Caco-2 (cell line): ENCODE measurements at regions of chr20 and their contacts with region 1.

Region 1: GRCh38 chr20:56458206-56458821 is 10.1 kb upstream of the RTF2 start:
- DNase-seq: no peak
- H3K4me3 ChIP-seq: no peak overlapping the region
- H3K4me3 Mint-ChIP-seq: no peak overlapping the region
- H3K27ac Mint-ChIP-seq: no peak overlapping the region
- H3K4me1 ChIP-seq: no peaks in the 10 kb centered on the region
- H3K4me1 Mint-ChIP-seq: no peaks in the 10 kb centered on the region
- H3K27me3 ChIP-seq: no peaks in the 10 kb centered on the region
- H3K27me3 Mint-ChIP-seq: peaks cover 14% of the 10 kb centered on the region
- CTCF ChIP-seq: no peak

Region 2: GRCh38 chr20:56380375-56380774 is 77.9 kb before region 1 on chr20:
- CTCF ChIA-PET with region 1: no interaction called
- POLR2A ChIA-PET with region 1: no interaction called
- intact Hi-C with region 1: no loop called
- DNase-seq: no peak
- H3K4me3 ChIP-seq: no peak overlapping the region
- H3K4me3 Mint-ChIP-seq: no peak overlapping the region
- H3K27ac Mint-ChIP-seq: no peak overlapping the region
- H3K4me1 ChIP-seq: no peaks in the 10 kb centered on the region
- H3K4me1 Mint-ChIP-seq: peaks cover 10% of the 10 kb centered on the region
- H3K27me3 ChIP-seq: no peaks in the 10 kb centered on the region
- H3K27me3 Mint-ChIP-seq: no peaks in the 10 kb centered on the region
- CTCF ChIP-seq: no peak

Region 3: DNA sequence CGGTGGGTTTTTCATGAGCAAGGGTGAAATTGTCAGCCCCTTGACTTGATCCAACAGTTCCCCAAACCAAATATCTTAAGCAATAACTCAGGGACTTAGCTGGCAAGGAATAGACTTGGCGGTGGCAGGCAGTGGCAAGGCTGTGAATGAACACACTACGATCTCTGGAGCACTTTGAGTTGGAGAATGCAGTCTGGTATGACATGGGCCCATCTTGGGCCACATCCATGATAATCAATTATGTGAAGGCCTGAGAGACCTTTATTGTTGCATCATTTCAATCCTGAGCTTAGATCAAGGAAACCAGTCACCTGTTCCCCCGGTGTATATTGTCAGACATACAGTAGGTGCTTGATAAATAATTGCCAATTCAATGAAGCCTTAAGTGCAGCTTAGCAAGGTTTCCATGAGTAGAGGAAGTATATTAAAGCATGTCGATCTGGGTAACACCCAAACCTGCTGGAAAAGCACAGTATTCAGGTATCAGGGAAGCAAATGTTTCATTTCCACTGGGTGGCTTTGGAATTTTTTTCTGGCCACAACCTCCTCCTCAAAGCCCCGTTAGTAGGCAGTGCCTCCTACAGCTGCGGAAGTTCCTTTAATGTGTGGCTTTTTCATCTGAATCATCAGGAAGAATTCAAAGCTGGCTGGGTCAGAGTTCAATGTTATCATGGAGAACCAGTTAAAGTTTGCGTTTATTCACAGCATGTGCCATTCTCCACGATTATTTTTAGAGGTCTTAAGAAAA is 36.1 kb before region 1 on chr20:
- CTCF ChIA-PET with region 1: no interaction called
- POLR2A ChIA-PET with region 1: no interaction called
- intact Hi-C with region 1: loop called (anchors 1 kb)
- DNase-seq: no peak
- H3K4me3 ChIP-seq: no peak overlapping the region
- H3K4me3 Mint-ChIP-seq: no peak overlapping the region
- H3K27ac Mint-ChIP-seq: no peak overlapping the region
- H3K4me1 ChIP-seq: peaks cover 20% of the 10 kb centered on the region
- H3K4me1 Mint-ChIP-seq: peaks cover 27% of the 10 kb centered on the region
- H3K27me3 ChIP-seq: no peaks in the 10 kb centered on the region
- H3K27me3 Mint-ChIP-seq: no peaks in the 10 kb centered on the region
- CTCF ChIP-seq: no peak